ENCODE measurements at regions of chr5 and their contacts with region 1.

Region 1: DNA sequence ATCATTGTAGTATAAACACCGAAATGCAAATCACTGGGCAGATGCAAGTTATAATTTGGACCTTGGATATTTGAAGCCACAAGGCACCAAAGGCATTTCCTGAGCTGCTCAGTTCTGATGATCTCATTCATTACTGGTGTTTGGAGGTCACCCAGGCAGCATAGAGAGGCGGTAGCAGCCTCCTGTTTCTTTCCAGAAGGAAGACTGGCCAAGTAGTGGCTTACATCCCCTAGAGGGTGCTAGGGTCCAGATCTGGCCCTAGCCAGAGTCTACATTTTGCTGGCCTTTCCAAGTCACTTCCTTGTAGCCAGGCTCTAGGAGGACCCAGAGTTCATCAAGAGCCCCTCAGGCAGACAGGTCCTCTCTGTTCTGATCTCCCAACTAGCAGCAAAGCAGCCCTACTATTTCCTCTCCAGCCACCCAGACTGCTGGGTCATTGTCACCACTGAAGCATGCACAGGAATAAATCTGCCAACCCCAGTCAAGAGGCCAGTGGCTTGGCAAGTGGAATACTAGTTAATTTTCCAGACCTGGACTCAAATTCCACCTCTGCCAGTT is 33.4 kb upstream of the TTC1 start:
- DNase-seq: peak in 1 of 2 donors; percentile 69
- ATAC-seq: peak; percentile 86
- H3K4me3 ChIP-seq: no peak overlapping the region
- H3K27ac ChIP-seq: peak overlapping the region; percentile 63 to 95
- H3K4me1 ChIP-seq: peaks cover 3 to 4% of the 10 kb centered on the region in 2 donors
- H3K27me3 ChIP-seq: no peaks in the 10 kb centered on the region

Region 2: GRCh38 chr5:159451197-159452052 is 524.1 kb before region 1 on chr5:
- intact Hi-C with region 1: loop called in 1 of 2 experiments (anchors 5 kb)
- DNase-seq: peak in 1 of 2 donors; percentile 63
- ATAC-seq: peak; percentile 86
- H3K4me3 ChIP-seq: no peak overlapping the region
- H3K27ac ChIP-seq: peak overlapping the region; percentile 16 to 83
- H3K4me1 ChIP-seq: peaks cover 0 to 10% of the 10 kb centered on the region in 2 donors
- H3K27me3 ChIP-seq: no peaks in the 10 kb centered on the region

Region 3: GRCh38 chr5:159752622-159753275 is 222.8 kb before region 1 on chr5:
- intact Hi-C with region 1: loop called in 1 of 2 experiments (anchors 10 kb)
- DNase-seq: peak in 1 of 2 donors; percentile 66
- ATAC-seq: peak; percentile 82
- H3K4me3 ChIP-seq: no peak overlapping the region
- H3K27ac ChIP-seq: peak overlapping the region; percentile 93 to 98
- H3K4me1 ChIP-seq: peaks cover 0 to 7% of the 10 kb centered on the region in 2 donors
- H3K27me3 ChIP-seq: no peaks in the 10 kb centered on the region

Measured in aorta (tissue), 5 donors.